Activated T-helper 1 cell treated with anti-CD3 and anti-CD28 coated beads, Interleukin-12 subunit alpha, Interleukin-12 subunit beta, Interleukin-2, Interleukin-4 antibody, amounts not matched to agents 30 ng/mL and 10 ng/mL and 1 ng/mL, durations not matched to agents 14 hours and 24 hours and 36 hours (primary cell): ENCODE measurements at regions of chr16 and their contacts with region 1.

Region 1: DNA sequence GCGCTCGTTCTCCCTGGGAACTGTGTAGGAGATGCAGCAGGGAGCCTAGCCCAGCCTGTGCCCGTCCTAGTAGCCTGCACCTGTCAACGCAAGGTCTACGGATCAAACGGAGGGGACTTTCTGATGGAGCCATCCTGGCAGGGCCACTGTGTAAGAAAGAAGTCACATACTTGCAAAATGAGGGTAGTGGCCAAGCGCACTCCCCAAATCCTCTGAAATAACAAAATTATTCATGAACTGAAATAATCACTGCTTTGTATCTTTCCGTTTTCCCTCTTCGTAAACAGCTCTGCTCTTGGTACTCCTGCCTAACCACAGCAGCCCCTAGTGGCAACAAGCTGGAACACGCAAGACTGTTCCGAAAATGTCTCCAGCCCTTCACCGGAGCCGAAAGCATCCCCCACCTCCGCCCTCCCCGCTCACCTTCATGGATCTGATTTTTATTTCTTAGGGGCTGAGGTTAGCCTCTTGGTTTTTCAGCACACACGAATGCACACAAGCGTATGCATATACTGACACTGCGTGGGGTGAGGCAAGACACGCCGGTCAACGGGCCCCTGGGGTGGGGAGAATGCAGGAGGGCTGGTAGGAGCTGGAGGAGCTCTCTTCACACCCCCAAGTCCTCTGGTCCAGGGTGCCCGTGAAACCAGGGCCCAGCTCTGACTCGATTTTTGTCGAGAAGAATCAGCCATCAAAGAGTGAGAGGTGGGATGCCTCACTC is 100.8 kb downstream of the ABCC12 start:
- DNase-seq: peak; percentile 11
- H3K4me3 Mint-ChIP-seq: no peak overlapping the region
- H3K27ac Mint-ChIP-seq: no peak overlapping the region
- H3K4me1 Mint-ChIP-seq: peaks cover 8% of the 10 kb centered on the region
- H3K27me3 Mint-ChIP-seq: peaks cover 25% of the 10 kb centered on the region

Region 2: GRCh38 chr16:46947900-46948547 is 1107.0 kb before region 1 on chr16:
- intact Hi-C with region 1: loop called (anchors 10 kb)
- DNase-seq: peak; percentile 19
- H3K4me3 Mint-ChIP-seq: no peak overlapping the region
- H3K27ac Mint-ChIP-seq: no peak overlapping the region
- H3K4me1 Mint-ChIP-seq: peaks cover 9% of the 10 kb centered on the region
- H3K27me3 Mint-ChIP-seq: peaks cover 2% of the 10 kb centered on the region

Region 3: GRCh38 chr16:47258874-47259461 is 796.1 kb before region 1 on chr16:
- intact Hi-C with region 1: loop called (anchors 10 kb)
- DNase-seq: no peak
- H3K4me3 Mint-ChIP-seq: no peak overlapping the region
- H3K27ac Mint-ChIP-seq: no peak overlapping the region
- H3K4me1 Mint-ChIP-seq: no peaks in the 10 kb centered on the region
- H3K27me3 Mint-ChIP-seq: no peaks in the 10 kb centered on the region